PC-9 (cell line): ENCODE measurements at regions of chr1 and their contacts with region 1.

Region 1: DNA sequence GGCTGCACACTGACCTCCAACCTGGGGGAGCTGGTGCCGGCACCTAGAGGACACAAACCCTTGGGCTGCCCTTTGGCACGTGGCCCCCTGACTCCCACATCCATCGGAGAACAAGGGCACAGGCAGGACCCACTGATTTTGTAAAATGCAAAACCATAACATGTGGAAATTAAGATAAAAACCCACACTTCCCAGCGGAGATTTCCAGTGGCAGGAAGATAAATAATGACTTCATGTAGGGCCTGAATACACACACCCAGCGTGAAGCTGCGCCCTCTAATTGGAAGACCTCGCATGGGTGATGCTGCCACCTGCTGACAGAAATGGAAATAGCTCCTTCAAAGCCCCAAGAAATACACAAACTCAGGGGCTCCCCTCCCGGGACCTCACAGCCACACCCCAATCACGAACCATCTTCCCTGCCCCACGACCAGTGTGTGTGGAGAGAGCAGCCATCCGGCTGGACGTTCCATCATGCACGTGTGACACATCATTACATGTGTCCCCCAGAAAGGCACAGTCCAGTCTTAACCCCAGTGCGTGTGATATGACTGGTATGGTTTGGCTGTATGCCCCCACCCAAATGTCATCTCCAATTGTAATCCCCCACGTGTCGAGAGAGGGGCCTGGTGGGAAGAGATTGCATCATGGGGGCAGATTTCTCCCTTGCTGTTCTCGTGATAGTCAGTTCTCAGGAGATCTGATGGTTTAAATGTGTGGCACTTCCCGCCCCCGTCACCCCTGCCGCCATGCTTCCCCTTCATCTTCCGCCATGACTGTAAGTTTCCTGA is 5.7 kb upstream of the TPRG1L start:
- DNase-seq: peak; percentile 61 to 65
- H3K4me3 ChIP-seq: no peak overlapping the region
- H3K27ac ChIP-seq: no peak overlapping the region
- H3K4me1 ChIP-seq: peaks cover 32% of the 10 kb centered on the region
- H3K27me3 ChIP-seq: no peaks in the 10 kb centered on the region
- CTCF ChIP-seq: peak; percentile 84

Region 2: GRCh38 chr1:3491291-3492246 is 127.5 kb before region 1 on chr1:
- CTCF ChIA-PET with region 1: interaction called, 4 read pairs
- POLR2A ChIA-PET with region 1: no interaction called
- intact Hi-C with region 1: loop called (anchors 1 kb)
- DNase-seq: peak in 1 of 2 experiments; percentile 72
- H3K4me3 ChIP-seq: no peak overlapping the region
- H3K27ac ChIP-seq: no peak overlapping the region
- H3K4me1 ChIP-seq: peaks cover 20% of the 10 kb centered on the region
- H3K27me3 ChIP-seq: no peaks in the 10 kb centered on the region
- CTCF ChIP-seq: peak; percentile 99

Region 3: DNA sequence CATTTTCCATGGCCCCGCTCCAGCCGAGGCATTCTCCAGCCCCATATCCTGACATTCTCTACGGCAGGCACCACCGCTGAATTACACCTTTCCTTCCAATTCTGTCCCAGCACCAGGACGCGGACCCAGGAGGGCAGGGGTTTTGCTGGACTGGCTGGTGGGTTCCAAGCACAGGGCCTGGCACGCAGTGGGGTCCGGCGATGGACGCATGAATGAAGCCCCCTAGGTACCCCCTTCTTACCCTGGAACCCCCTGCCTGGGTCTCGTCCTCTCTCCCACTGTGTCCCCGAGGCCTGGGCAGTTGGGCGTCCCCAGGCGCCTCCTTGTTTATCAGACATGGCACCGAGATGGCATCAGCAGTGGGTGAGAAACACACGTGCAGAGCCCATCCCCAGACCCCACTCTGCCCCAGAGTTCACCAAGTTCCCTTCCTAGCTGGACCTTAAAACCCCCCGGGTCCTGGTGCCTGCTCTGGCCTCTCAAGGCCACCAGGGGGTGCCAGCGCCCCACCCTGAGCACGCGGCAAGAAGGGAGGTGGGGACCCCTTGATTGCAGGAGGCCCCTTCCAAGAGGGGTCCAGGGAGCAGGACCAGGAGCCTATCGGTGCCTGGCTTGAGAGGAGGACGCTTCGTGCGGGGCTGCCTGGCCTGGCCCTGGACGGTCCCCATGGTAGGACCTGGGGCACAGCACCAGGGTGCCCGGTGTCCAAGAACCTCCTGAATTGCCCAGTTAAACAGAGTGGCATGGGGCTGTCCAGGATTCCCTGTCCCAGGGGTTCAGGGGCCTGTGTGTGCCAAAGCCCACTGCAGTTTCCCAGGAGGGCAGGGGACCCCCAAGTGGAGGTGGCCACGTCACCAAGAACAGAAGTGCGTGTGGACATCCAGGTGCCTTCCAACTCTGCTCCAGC is 53.9 kb before region 1 on chr1:
- CTCF ChIA-PET with region 1: interaction called, 5 read pairs
- POLR2A ChIA-PET with region 1: no interaction called
- intact Hi-C with region 1: loop called (anchors 1 kb)
- DNase-seq: no peak
- H3K4me3 ChIP-seq: no peak overlapping the region
- H3K27ac ChIP-seq: no peak overlapping the region
- H3K4me1 ChIP-seq: no peaks in the 10 kb centered on the region
- H3K27me3 ChIP-seq: no peaks in the 10 kb centered on the region
- CTCF ChIP-seq: peak; percentile 93

Region 4: DNA sequence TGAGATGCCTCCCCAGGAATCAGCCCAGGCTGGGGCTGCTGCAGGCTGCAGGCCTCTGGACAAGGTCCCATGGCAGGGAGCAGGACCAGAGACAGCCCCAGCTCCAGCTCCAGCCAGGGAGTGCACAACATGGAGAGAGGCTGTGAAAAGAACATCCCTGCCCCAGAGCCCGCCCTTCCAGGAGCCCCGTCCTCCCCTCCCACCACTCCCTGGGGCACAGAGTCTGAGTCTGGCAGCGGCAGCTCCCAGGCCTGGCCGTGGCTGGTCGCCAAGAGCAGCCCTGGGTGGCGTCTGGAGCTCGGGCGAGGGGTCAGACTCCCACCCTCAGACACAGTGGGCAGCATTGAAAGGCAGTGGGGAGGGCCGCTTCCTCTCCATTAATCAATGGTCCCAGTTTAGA is 45.6 kb before region 1 on chr1:
- CTCF ChIA-PET with region 1: interaction called, 5 read pairs
- POLR2A ChIA-PET with region 1: no interaction called
- intact Hi-C with region 1: loop called (anchors 1 kb)
- DNase-seq: no peak
- H3K4me3 ChIP-seq: no peak overlapping the region
- H3K27ac ChIP-seq: no peak overlapping the region
- H3K4me1 ChIP-seq: peaks cover 6% of the 10 kb centered on the region; the same call in 1 of the 2 replicates
- H3K27me3 ChIP-seq: no peaks in the 10 kb centered on the region
- CTCF ChIP-seq: no peak

Region 5: GRCh38 chr1:3842912-3843311 is 223.8 kb after region 1 on chr1:
- CTCF ChIA-PET with region 1: no interaction called
- POLR2A ChIA-PET with region 1: no interaction called
- intact Hi-C with region 1: no loop called
- DNase-seq: no peak
- H3K4me3 ChIP-seq: no peak overlapping the region
- H3K27ac ChIP-seq: no peak overlapping the region
- H3K4me1 ChIP-seq: no peaks in the 10 kb centered on the region
- H3K27me3 ChIP-seq: no peaks in the 10 kb centered on the region
- CTCF ChIP-seq: no peak

Region 6: DNA sequence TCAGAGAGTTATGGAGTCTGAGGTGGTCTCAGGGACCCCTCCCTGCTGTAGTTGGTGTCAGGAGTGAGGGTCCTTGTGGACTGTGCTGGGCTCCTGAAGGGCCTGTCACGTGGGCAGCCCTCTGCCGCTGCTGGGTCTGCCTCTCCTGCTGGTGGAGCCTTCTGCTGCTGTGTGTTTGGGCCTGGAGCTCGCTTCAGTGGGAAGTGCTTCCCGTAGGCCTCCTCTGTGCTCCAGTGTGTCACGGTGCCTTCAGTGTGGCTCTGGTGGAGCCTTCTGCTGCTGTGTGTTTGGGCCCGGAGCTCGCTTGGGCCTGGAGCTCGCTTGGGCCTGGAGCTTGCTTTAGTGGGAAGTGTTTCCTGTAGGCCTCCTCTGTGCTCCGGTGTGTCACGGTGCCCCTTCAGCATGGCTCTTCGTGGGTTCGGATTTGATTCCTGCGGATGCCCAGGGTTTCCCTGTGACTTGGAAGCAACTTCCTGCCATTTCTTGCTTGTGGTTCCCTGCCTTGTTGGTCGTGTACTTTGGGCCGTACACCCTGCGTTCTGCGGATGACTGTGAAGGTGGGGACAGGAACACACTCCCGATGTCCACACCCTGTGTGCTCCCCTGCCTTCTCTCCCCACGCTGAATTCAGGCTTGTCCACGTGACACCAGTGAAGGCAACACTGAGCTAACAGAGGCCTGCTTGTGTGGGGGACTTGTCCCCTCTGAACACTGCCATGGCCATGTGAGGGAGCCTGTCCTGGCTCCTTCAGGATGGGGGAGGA is 261.5 kb after region 1 on chr1:
- CTCF ChIA-PET with region 1: no interaction called
- POLR2A ChIA-PET with region 1: no interaction called
- intact Hi-C with region 1: no loop called
- DNase-seq: no peak
- H3K4me3 ChIP-seq: no peak overlapping the region
- H3K27ac ChIP-seq: no peak overlapping the region
- H3K4me1 ChIP-seq: no peaks in the 10 kb centered on the region
- H3K27me3 ChIP-seq: no peaks in the 10 kb centered on the region
- CTCF ChIP-seq: no peak